Ovary (tissue), 10 donors: ENCODE measurements at regions of chr1 and their contacts with region 1.

Region 1: DNA sequence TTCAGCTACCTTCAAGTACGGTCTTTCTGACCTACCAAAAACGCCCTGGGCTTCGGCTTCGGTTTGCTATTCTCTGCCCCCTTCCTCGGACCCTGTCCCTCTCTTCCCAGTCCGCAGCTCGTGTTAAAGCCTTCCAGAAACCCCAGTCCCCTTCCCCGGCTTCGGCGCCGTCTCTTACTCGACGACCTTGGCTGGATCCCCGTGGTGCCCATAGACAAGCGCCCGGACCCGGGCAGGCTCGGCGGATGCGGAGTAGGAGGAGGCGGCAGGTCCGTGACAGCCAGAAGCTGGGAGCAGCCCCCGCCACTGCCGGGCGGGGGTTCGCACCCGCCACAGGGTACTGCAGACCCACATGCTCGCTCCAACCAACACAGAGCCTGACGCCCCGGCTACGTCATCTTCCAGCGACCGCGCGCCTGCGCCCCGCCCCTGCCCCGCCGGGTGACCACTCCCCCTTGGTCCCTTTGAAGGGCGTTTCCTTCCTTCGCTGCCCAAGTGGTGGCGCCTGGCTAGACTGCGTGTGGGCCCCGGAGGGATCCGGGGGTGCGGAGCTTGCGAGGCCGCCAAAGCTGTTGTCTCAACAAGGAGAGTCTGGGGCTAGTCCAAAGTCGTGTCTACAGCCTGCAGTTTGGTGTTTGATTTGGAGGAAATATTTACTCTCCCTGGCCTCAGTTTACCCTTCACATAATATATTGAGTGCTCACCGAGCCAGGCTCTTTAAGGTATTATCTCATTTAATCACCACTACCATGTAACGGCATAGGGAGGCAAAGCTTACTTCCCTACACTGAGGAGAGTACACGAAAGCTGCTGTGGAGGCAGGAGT is at the start of gene MECR:
- DNase-seq: peak; percentile 91 to 97 (median 95)
- H3K4me3 ChIP-seq: peak within 1 kb of the TSS; percentile 92
- H3K27ac ChIP-seq: peak within 1 kb of the TSS; percentile 56 to 71
- H3K4me1 ChIP-seq: peaks cover 2% of the 10 kb centered on the region
- H3K27me3 ChIP-seq: no peaks in the 10 kb centered on the region
- CTCF ChIP-seq: peak in 2 of 3 donors; percentile 12 to 31
- EP300 ChIP-seq: no peak
- POLR2A ChIP-seq: peak; percentile 45
- total RNA-seq, gene MECR: 11.9 to 33.9 (median 21.6) TPM

Region 2: GRCh38 chr1:29259802-29260441 is 29.2 kb after region 1 on chr1:
- intact Hi-C with region 1: no loop called
- DNase-seq: peak; percentile 39 to 81 (median 62)
- H3K4me3 ChIP-seq: peak overlapping the region; percentile 45
- H3K27ac ChIP-seq: no peak overlapping the region
- H3K4me1 ChIP-seq: peaks cover 14% of the 10 kb centered on the region
- H3K27me3 ChIP-seq: no peaks in the 10 kb centered on the region
- CTCF ChIP-seq: no peak
- EP300 ChIP-seq: no peak
- POLR2A ChIP-seq: no peak

Region 3: GRCh38 chr1:29290414-29290985 is 59.7 kb after region 1 on chr1:
- intact Hi-C with region 1: no loop called
- DNase-seq: no peak
- H3K4me3 ChIP-seq: no peak overlapping the region
- H3K27ac ChIP-seq: no peak overlapping the region
- H3K4me1 ChIP-seq: no peaks in the 10 kb centered on the region
- H3K27me3 ChIP-seq: no peaks in the 10 kb centered on the region
- CTCF ChIP-seq: no peak
- EP300 ChIP-seq: no peak
- POLR2A ChIP-seq: no peak

Region 4: GRCh38 chr1:30085811-30086770 is 855.3 kb after region 1 on chr1:
- intact Hi-C with region 1: loop called in 1 of 4 experiments (anchors 10 kb)
- DNase-seq: peak; percentile 26 to 69 (median 58)
- H3K4me3 ChIP-seq: no peak overlapping the region
- H3K27ac ChIP-seq: no peak overlapping the region
- H3K4me1 ChIP-seq: peaks cover 10% of the 10 kb centered on the region
- H3K27me3 ChIP-seq: no peaks in the 10 kb centered on the region
- CTCF ChIP-seq: peak in 2 of 3 donors; percentile 44 to 63
- EP300 ChIP-seq: no peak
- POLR2A ChIP-seq: no peak

Region 5: GRCh38 chr1:30779294-30780071 is 1548.7 kb after region 1 on chr1:
- intact Hi-C with region 1: loop called in 1 of 4 experiments (anchors 10 kb)
- DNase-seq: peak; percentile 59 to 88 (median 79)
- H3K4me3 ChIP-seq: no peak overlapping the region
- H3K27ac ChIP-seq: no peak overlapping the region
- H3K4me1 ChIP-seq: no peaks in the 10 kb centered on the region
- H3K27me3 ChIP-seq: no peaks in the 10 kb centered on the region
- CTCF ChIP-seq: peak; percentile 74 to 93 (median 75)
- EP300 ChIP-seq: no peak
- POLR2A ChIP-seq: no peak